Psoas muscle (tissue), 8 donors: ENCODE measurements at regions of chr20 and their contacts with region 1.

Region 1: DNA sequence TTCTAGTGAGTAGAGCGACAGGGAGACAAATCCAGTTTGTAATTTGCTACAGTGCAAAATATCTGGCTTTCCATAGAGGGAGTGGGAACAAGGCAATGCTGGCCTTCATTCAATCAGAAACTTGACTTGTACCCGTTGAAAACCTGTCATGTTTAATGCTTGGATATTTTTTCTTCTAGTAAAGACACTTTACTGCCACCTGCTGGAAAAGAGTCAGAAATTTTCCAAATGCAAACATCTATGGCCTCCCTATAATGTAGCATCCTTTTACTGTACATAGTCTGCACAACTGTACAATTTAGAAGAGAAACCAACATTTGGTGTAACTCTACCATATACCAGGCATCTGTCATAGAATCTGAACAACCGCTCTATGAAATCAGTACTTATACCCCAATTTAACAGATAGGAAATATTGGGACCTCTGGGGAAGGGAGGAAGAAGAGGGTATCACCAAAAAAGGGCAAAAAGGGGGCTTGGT is 16.7 kb upstream of the TBC1D20 start:
- DNase-seq: no peak
- ATAC-seq: peak; percentile 48 to 70 (median 56)
- H3K4me3 ChIP-seq: no peak overlapping the region
- H3K27ac ChIP-seq: no peak overlapping the region
- H3K4me1 ChIP-seq: peaks cover 9% of the 10 kb centered on the region
- H3K27me3 ChIP-seq: no peaks in the 10 kb centered on the region
- CTCF ChIP-seq: peak; percentile 66

Region 2: DNA sequence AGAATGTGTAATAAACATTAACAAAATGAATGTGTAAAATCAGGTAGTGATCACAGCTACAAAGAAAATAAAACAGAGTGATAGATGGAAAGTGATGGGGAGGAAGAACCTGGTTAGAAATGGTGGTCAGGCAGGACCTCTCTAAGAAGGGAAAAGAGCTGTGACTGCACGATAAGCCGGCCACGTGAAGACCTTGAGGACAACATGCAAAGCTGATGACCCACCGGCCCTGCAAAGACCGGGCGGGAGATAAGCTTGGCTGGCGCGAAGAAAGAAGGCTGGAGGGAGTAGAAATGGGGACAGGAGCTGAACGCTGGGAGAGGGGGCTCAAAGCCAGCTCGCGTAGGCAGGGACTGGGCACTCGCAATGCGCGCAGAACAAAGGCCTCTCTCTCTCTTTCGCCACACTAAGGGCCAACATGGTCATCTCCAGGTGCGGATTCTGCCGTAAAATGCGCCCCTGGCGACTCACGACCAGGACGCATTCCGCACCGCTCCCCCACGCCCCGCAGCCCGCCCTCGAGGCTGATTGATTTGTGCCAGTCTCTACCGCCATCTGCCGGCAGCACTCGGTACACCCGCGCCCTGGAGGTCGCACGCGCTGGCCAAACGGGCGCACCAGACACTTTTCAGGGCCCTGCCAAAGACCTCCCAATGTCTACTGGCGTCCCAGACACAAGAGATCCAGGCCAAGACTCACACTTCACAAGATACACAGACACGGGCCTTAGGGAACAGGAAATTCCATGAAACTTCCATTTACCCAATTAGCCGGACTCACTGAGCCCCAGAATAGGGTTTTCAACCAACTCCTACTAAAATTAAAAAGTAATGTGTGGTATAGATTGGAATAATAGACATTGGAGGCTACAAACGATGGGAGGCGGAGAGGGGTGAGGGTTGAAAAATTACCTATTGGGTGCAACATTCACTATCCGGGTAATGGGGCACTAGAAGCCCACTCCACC is 212.1 kb before region 1 on chr20:
- intact Hi-C with region 1: no loop called
- DNase-seq: peak; percentile 86 to 91
- ATAC-seq: peak; percentile 92 to 99 (median 95)
- H3K4me3 ChIP-seq: peak overlapping the region; percentile 72
- H3K27ac ChIP-seq: no peak overlapping the region
- H3K4me1 ChIP-seq: no peaks in the 10 kb centered on the region
- H3K27me3 ChIP-seq: no peaks in the 10 kb centered on the region
- CTCF ChIP-seq: peak; percentile 97

Region 3: DNA sequence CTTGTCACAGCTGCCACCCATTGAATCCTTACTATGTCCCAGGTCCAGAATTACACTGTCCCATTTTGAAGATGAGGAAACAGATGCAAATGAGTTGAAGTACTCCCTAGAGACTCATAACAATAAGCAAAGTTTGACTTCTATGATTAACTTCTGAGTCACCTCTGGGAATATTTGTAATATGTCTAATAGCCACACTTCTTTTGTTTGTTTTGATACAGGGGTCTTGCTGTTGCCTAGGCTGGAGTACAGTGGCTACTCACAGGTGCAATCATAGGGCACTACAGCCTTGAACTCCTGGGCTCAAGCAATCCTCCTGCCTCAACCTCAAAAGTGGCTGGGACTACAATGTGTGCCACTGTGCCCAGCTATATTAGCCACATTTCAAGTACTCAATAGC is 165.0 kb before region 1 on chr20:
- intact Hi-C with region 1: no loop called
- DNase-seq: no peak
- ATAC-seq: no peak
- H3K4me3 ChIP-seq: no peak overlapping the region
- H3K27ac ChIP-seq: no peak overlapping the region
- H3K4me1 ChIP-seq: no peaks in the 10 kb centered on the region
- H3K27me3 ChIP-seq: no peaks in the 10 kb centered on the region
- CTCF ChIP-seq: no peak

Region 4: DNA sequence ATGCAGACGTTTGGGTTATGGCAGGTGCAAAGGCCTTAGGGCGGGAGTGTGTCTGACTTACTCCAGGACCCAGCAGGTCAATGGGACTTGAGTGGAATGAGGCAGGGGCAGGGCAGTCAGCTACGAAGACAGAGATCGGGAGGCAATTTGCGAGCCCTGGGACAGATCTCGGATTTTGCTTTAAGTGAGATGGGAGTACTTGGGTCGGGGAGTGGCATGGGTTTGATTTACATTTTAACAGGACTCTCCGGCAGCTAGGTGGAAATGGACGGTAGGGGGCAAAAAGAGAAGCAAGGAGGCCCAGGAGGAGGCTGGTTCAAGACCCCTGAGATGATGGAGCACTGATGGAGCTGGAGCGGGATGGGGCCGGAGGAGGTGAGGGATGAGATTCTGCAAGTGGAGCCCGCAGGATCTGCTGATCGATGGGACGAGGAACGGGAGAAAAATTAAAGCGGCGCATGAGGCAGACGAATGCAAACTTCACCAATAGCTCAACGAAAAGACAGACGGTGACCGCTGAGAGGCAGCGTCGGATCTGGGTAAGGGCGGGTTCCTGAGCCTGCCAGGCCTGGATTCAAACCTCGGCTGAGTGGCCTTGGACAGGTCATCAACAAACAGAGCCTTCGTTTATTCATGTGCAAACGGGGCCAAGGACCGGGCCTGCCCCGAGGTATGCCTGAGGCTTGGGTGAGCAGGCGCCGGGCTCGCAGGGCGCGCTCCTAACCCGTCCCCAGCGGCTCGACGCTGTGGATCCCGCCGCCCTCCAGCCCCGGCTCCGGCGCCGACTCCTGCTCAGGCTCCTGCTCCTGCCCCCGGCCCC is 71.6 kb before region 1 on chr20:
- intact Hi-C with region 1: loop called (anchors 5 to 10 kb)
- DNase-seq: peak; percentile 77 to 88
- ATAC-seq: peak; percentile 63 to 72 (median 69)
- H3K4me3 ChIP-seq: peak overlapping the region; percentile 91
- H3K27ac ChIP-seq: peak overlapping the region; percentile 95
- H3K4me1 ChIP-seq: peaks cover 27% of the 10 kb centered on the region
- H3K27me3 ChIP-seq: no peaks in the 10 kb centered on the region
- CTCF ChIP-seq: peak; percentile 14